CD4-positive, alpha-beta memory T cell (primary cell): ENCODE measurements at regions of chr1 and their contacts with region 1.

Region 1: GRCh38 chr1:145858894-145859490 is at the start of gene PIAS3:
- DNase-seq: peak; percentile 76 to 84 (median 80)
- H3K4me3 ChIP-seq: peak within 1 kb of the TSS; percentile 90 to 96
- H3K4me3 Mint-ChIP-seq: peak within 1 kb of the TSS; percentile 92 to 97 (median 96)
- H3K27ac ChIP-seq: peak within 1 kb of the TSS; percentile 74
- H3K27ac Mint-ChIP-seq: peak within 1 kb of the TSS; percentile 89 to 97 (median 90)
- H3K4me1 ChIP-seq: peaks cover 17% of the 10 kb centered on the region
- H3K4me1 Mint-ChIP-seq: peaks cover 8 to 29% (median 19%) of the 10 kb centered on the region in 4 donors
- H3K27me3 ChIP-seq: no peaks in the 10 kb centered on the region
- H3K27me3 Mint-ChIP-seq: peaks cover 0 to 2% of the 10 kb centered on the region in 2 donors
- total RNA-seq, gene PIAS3: 30.3 to 33.6 TPM

Region 2: GRCh38 chr1:145845514-145846161 is 13.4 kb before region 1 on chr1 and contains the start of gene NUDT17:
- CTCF ChIA-PET with region 1: interaction called, 199 read pairs
- POLR2A ChIA-PET with region 1: interaction called, 133 read pairs
- intact Hi-C with region 1: loop called (anchors 2 kb)
- DNase-seq: peak; percentile 67 to 75 (median 68)
- H3K4me3 ChIP-seq: peak within 1 kb of the TSS; percentile 18 to 77
- H3K4me3 Mint-ChIP-seq: no peak within 1 kb of the TSS
- H3K27ac ChIP-seq: peak within 1 kb of the TSS; percentile 63
- H3K27ac Mint-ChIP-seq: peak within 1 kb of the TSS in 6 of 7 donors; percentile 43 to 91 (median 81)
- H3K4me1 ChIP-seq: peaks cover 11% of the 10 kb centered on the region
- H3K4me1 Mint-ChIP-seq: peaks cover 6 to 7% (median 6%) of the 10 kb centered on the region in 4 donors
- H3K27me3 ChIP-seq: no peaks in the 10 kb centered on the region
- H3K27me3 Mint-ChIP-seq: no peaks in the 10 kb centered on the region
- total RNA-seq, gene NUDT17: 3.1 to 5.6 TPM

Region 3: GRCh38 chr1:145891587-145892485 is 32.8 kb after region 1 on chr1:
- CTCF ChIA-PET with region 1: no interaction called
- POLR2A ChIA-PET with region 1: interaction called, 12 read pairs
- intact Hi-C with region 1: no loop called
- DNase-seq: peak; percentile 21 to 50 (median 38)
- H3K4me3 ChIP-seq: no peak overlapping the region
- H3K4me3 Mint-ChIP-seq: no peak overlapping the region
- H3K27ac ChIP-seq: no peak overlapping the region
- H3K27ac Mint-ChIP-seq: no peak overlapping the region
- H3K4me1 ChIP-seq: no peaks in the 10 kb centered on the region
- H3K4me1 Mint-ChIP-seq: peaks cover 0 to 2% (median under 1%) of the 10 kb centered on the region in 4 donors
- H3K27me3 ChIP-seq: no peaks in the 10 kb centered on the region
- H3K27me3 Mint-ChIP-seq: peaks cover 0 to under 1% of the 10 kb centered on the region in 2 donors

Region 4: GRCh38 chr1:145927063-145927886 is 68.3 kb after region 1 on chr1 and contains the start of gene RBM8A:
- CTCF ChIA-PET with region 1: interaction called, 9 read pairs
- POLR2A ChIA-PET with region 1: interaction called, 50 read pairs
- intact Hi-C with region 1: no loop called
- DNase-seq: peak; percentile 94 to 98 (median 97)
- H3K4me3 ChIP-seq: peak within 1 kb of the TSS; percentile 96 to 99
- H3K4me3 Mint-ChIP-seq: peak within 1 kb of the TSS in 5 of 8 donors; percentile 20 to 69 (median 42)
- H3K27ac ChIP-seq: peak within 1 kb of the TSS; percentile 96
- H3K27ac Mint-ChIP-seq: peak within 1 kb of the TSS in 4 of 7 donors; percentile 72 to 94 (median 82)
- H3K4me1 ChIP-seq: peaks cover 29% of the 10 kb centered on the region
- H3K4me1 Mint-ChIP-seq: peaks cover 10 to 25% (median 17%) of the 10 kb centered on the region in 4 donors
- H3K27me3 ChIP-seq: no peaks in the 10 kb centered on the region
- H3K27me3 Mint-ChIP-seq: no peaks in the 10 kb centered on the region
- total RNA-seq, gene RBM8A: 116 to 122 TPM

Region 5: DNA sequence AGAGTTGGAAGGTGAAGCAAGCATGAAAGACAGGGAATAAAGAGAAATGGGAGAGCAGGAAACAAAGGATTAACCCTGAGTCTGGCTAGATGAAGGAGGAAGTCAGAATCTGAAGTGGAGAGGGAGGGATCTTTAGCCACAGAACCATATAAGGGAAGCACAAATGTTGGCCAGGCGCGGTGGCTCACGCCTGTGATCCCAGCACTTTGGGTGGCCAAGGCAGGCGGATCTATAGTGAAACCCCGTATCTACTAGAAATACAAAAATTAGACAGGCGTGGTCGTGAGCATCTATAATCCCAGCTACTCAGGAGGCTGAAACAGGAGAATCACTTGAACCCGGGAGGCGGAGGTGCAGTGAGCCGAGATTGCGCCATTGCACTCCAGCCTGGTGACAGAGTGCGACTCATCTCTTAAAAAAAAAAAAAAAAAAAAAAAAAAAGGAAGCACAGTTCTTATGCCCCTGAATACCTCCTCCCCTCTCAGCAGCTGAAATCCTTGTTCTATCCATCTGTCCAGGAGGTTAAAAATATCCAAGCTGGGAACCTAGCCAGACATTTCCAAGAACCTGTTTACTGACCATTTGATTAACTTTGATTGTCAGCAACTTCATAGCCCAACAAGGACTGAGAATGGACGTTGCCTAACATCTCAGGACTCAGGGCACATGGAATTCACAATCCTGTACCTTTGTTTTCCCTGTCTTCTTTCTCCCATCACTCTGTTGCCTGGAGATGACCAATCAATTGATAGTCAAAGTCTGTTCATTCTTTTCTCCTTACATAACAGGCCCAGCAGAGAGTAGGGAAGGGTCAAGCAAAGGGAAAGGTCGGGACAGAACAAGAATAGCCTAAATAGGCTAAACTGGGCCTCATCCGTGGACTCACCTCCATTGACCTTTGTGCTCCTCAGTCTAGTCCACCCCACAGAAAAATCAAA is 126.8 kb after region 1 on chr1:
- CTCF ChIA-PET with region 1: no interaction called
- POLR2A ChIA-PET with region 1: interaction called, 15 read pairs
- intact Hi-C with region 1: no loop called
- DNase-seq: no peak
- H3K4me3 ChIP-seq: peak overlapping the region in 1 of 2 donors; percentile 15
- H3K4me3 Mint-ChIP-seq: peak overlapping the region; percentile 52 to 92 (median 76)
- H3K27ac ChIP-seq: no peak overlapping the region
- H3K27ac Mint-ChIP-seq: peak overlapping the region in 6 of 7 donors; percentile 88 to 94 (median 92)
- H3K4me1 ChIP-seq: peaks cover 85% of the 10 kb centered on the region
- H3K4me1 Mint-ChIP-seq: peaks cover 25 to 67% (median 43%) of the 10 kb centered on the region in 4 donors
- H3K27me3 ChIP-seq: no peaks in the 10 kb centered on the region
- H3K27me3 Mint-ChIP-seq: no peaks in the 10 kb centered on the region